ENCODE measurements at regions of chr16 and their contacts with region 1.

Region 1: GRCh38 chr16:46662123-46662522 is 26.9 kb downstream of the VPS35 start:
- DNase-seq: no peak
- H3K4me3 Mint-ChIP-seq: no peak overlapping the region
- H3K27ac Mint-ChIP-seq: peak overlapping the region; percentile 50
- H3K4me1 Mint-ChIP-seq: peaks cover 14% of the 10 kb centered on the region
- H3K27me3 Mint-ChIP-seq: no peaks in the 10 kb centered on the region

Region 2: GRCh38 chr16:46673320-46674013 is 11.3 kb after region 1 on chr16:
- CTCF ChIA-PET with region 1: interaction called, 11 read pairs
- intact Hi-C with region 1: no loop called
- DNase-seq: peak; percentile 66
- H3K4me3 Mint-ChIP-seq: no peak overlapping the region
- H3K27ac Mint-ChIP-seq: no peak overlapping the region
- H3K4me1 Mint-ChIP-seq: no peaks in the 10 kb centered on the region
- H3K27me3 Mint-ChIP-seq: no peaks in the 10 kb centered on the region